ENCODE measurements at regions of chr1 and their contacts with region 1.

Region 1: GRCh38 chr1:226920446-226920894 is 19.6 kb upstream of the COQ8A start:
- DNase-seq: peak; percentile 79
- ATAC-seq: peak; percentile 98
- H3K4me3 ChIP-seq: no peak overlapping the region
- H3K27ac ChIP-seq: peak overlapping the region; percentile 64
- H3K4me1 ChIP-seq: peaks cover 30% of the 10 kb centered on the region
- H3K27me3 ChIP-seq: no peaks in the 10 kb centered on the region
- CTCF ChIP-seq: no peak
- EP300 ChIP-seq: peak in 1 of 2 experiments; percentile 77; a peak in 1 of 4 replicates
- POLR2A ChIP-seq: no peak
- RAD21 ChIP-seq: no peak

Region 2: GRCh38 chr1:226882631-226883409 is 37.6 kb before region 1 on chr1:
- CTCF ChIA-PET with region 1: no interaction called
- POLR2A ChIA-PET with region 1: no interaction called
- in situ Hi-C with region 1: no loop called
- intact Hi-C with region 1: no loop called
- DNase-seq: no peak
- ATAC-seq: no peak; the same call in 2 of the 3 replicates
- H3K4me3 ChIP-seq: no peak overlapping the region
- H3K27ac ChIP-seq: no peak overlapping the region
- H3K4me1 ChIP-seq: no peaks in the 10 kb centered on the region
- H3K27me3 ChIP-seq: no peaks in the 10 kb centered on the region
- CTCF ChIP-seq: no peak
- EP300 ChIP-seq: no peak
- POLR2A ChIP-seq: no peak
- RAD21 ChIP-seq: no peak

Region 3: DNA sequence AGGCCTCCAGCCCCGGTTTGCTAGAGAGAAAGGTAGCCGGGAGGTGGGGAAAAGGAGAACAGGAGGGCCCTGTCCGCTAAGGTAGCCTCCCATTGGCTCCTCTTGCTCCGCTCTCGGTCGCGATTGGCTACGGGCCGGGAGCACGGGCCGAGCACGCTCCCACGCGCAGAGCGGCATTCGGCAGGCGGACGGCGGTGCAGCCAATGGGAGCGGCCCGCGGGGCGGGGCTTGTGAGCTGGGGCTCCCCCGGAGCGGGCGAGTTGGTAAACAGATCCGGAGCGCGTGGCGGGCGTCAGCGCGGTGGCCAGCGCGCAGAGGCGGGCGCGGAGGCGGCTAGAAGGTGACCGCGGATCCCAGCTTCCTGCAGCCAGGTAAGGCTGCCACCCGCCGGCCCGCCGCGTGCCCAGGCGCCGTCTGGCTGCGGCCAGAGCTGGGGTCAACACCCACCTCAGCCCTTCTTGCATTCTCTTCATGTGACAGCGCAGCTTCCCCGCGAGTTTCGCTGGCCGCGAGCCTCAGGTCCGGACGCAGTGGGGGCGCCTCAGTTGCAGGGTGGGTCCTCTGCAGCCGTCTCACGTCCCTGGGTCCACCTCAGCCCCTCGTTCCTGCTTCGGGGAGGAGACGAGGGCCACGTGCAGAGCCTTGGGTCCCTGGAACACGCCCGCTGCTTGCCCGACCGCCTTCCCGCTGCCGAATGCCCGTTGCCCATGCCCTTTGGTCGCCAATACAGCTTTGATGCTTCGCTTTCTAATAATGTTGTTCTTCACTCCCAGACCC is 19.7 kb after region 1 on chr1 and contains the start of gene COQ8A:
- CTCF ChIA-PET with region 1: no interaction called
- POLR2A ChIA-PET with region 1: interaction called, 35 read pairs
- in situ Hi-C with region 1: no loop called
- intact Hi-C with region 1: loop called (anchors 2 kb)
- DNase-seq: peak; percentile 99
- ATAC-seq: peak; percentile 94
- H3K4me3 ChIP-seq: peak within 1 kb of the TSS; percentile 77 to 83 (median 80)
- H3K27ac ChIP-seq: peak within 1 kb of the TSS; percentile 97
- H3K4me1 ChIP-seq: peaks cover 62% of the 10 kb centered on the region
- H3K27me3 ChIP-seq: no peaks in the 10 kb centered on the region; a peak in 1 of 5 replicates
- CTCF ChIP-seq: peak; percentile 34; the same call in 1 of the 2 replicates
- EP300 ChIP-seq: no peak
- POLR2A ChIP-seq: no peak; a peak in 2 of 4 replicates
- RAD21 ChIP-seq: peak; percentile 61
- total RNA-seq, gene COQ8A: 63.3 and 88.7 TPM in 2 replicates